PC-9 (cell line): ENCODE measurements at regions of chr15 and their contacts with region 1.

Region 1: DNA sequence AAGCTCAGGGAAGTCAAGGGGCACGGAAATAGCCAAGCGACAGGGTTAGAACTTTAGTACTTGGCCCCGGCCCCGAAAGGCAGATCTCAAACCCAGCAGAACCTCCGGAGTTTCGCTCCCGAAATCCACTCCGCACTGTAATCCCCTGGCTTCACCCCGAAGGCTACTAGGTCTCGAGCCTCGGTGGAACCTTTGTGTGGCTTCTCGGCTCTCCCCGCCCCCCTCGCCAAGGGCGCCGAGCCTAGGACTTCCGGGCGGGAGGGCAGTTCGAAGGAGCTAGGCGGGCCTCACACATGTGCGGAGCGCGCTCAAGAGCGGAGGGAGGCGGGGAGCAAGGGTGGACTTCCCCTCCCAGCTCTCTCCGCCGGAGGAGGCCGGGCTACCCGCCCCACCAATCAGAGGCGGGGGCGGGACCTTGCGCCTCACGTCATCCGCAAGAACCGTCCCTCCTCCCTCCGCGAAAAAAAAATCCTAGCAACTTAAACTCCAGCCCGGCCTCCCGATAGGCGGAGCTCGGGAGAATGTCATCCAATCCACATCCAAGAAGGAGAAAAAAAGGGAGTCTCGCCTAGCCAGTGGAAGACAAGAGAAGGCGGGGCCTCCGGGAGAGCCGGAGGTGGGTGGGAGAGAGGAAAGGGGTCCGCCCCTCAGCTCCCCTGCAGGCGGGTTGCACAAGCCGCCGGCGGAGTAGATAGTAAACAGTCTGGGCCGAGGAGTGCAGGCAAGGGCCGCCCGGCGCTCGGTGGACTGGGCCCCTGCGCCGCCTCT is 2.4 kb upstream of the SIN3A start:
- DNase-seq: peak; percentile 98
- H3K4me3 ChIP-seq: peak overlapping the region; percentile 82
- H3K27ac ChIP-seq: peak overlapping the region; percentile 84
- H3K4me1 ChIP-seq: peaks cover 21% of the 10 kb centered on the region
- H3K27me3 ChIP-seq: no peaks in the 10 kb centered on the region
- CTCF ChIP-seq: no peak

Region 2: GRCh38 chr15:74956648-74957300 is 497.1 kb before region 1 on chr15 and contains the start of gene RPP25:
- CTCF ChIA-PET with region 1: no interaction called
- POLR2A ChIA-PET with region 1: interaction called, 16 read pairs
- intact Hi-C with region 1: no loop called
- DNase-seq: peak; percentile 74 to 88
- H3K4me3 ChIP-seq: peak within 1 kb of the TSS; percentile 92
- H3K27ac ChIP-seq: peak within 1 kb of the TSS; percentile 75
- H3K4me1 ChIP-seq: peaks cover 26% of the 10 kb centered on the region
- H3K27me3 ChIP-seq: no peaks in the 10 kb centered on the region
- CTCF ChIP-seq: 0 out of 2 replicates have a peak, but pooled peaks have one; percentile 2
- total RNA-seq, gene RPP25: 14.9 and 19.6 TPM in 2 replicates

Region 3: DNA sequence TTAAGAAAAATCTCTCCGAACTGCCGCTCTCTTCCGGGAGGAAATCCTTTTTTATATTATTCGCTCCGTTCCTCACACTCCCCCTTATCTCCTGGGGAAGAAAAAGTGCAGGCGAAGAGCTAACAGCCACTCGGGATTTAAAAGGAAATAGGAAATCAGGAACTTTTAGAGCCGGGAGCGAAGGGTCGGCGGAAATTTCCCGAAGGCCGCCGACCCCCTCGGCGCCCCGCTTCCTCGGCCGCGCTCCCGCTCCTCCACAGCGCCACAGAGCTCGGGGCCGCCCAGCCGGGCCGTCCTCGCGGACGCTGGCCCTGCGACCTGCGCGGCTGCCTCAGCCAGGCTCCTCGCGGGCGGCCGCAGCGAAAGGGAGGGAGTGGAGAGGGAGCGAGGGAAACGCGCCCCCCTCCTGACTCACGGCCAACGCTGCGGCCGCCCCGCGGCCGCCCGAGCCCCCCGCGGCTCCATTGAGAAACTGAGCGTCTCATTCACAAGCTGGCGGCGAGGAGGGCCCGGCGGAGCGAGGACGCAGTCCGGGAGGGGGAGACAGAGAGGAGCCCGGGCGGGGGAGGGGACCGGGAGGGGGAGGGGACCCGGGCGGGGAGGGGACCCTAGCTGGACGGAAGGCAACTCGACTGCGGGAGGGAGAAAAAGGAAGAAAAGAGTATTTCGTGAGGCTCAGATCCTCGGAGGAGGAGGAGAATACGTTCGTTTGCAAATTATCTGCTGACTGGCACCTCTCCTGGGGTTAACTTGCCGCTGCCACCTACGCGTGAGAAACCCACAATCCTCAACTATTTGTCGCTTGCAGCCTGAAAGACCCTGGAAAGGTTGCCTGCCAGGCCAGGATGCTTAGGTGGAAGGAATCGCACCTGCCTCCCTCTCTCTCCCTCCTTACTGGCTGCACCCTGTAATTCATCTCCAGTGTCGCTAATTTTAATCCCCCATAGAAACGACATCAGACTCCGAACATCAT is 125.3 kb after region 1 on chr15 and contains the start of gene PTPN9:
- CTCF ChIA-PET with region 1: no interaction called
- POLR2A ChIA-PET with region 1: interaction called, 8 read pairs
- intact Hi-C with region 1: loop called (anchors 2 kb)
- DNase-seq: peak in 1 of 2 experiments; percentile 53
- H3K4me3 ChIP-seq: peak within 1 kb of the TSS; percentile 96
- H3K27ac ChIP-seq: peak within 1 kb of the TSS; percentile 26; the same call in 1 of the 2 replicates
- H3K4me1 ChIP-seq: peaks cover 13% of the 10 kb centered on the region
- H3K27me3 ChIP-seq: no peaks in the 10 kb centered on the region
- CTCF ChIP-seq: peak; percentile 41; the same call in 1 of the 2 replicates
- total RNA-seq, gene PTPN9: 22.4 and 24.1 TPM in 2 replicates

Region 4: GRCh38 chr15:75639709-75640482 is 186.0 kb after region 1 on chr15 and contains the start of gene IMP3:
- CTCF ChIA-PET with region 1: interaction called, 3 read pairs
- POLR2A ChIA-PET with region 1: interaction called, 21 read pairs
- intact Hi-C with region 1: loop called (anchors 2 kb)
- DNase-seq: peak; percentile 92 to 93
- H3K4me3 ChIP-seq: peak within 1 kb of the TSS; percentile 88
- H3K27ac ChIP-seq: peak within 1 kb of the TSS; percentile 70
- H3K4me1 ChIP-seq: peaks cover 38% of the 10 kb centered on the region
- H3K27me3 ChIP-seq: no peaks in the 10 kb centered on the region
- CTCF ChIP-seq: no peak
- total RNA-seq, gene IMP3: 45.4 and 53.0 TPM in 2 replicates

Region 5: GRCh38 chr15:75758071-75758872 is 304.4 kb after region 1 on chr15:
- CTCF ChIA-PET with region 1: no interaction called
- POLR2A ChIA-PET with region 1: interaction called, 14 read pairs
- intact Hi-C with region 1: no loop called
- DNase-seq: peak; percentile 68 to 82
- H3K4me3 ChIP-seq: peak overlapping the region; percentile 60
- H3K27ac ChIP-seq: no peak overlapping the region
- H3K4me1 ChIP-seq: peaks cover 4% of the 10 kb centered on the region; the same call in 1 of the 2 replicates
- H3K27me3 ChIP-seq: no peaks in the 10 kb centered on the region
- CTCF ChIP-seq: no peak